ENCODE measurements at regions of chr1 and their contacts with region 1.

Region 1: GRCh38 chr1:182143154-182143657 is 81.7 kb upstream of the ZNF648 start:
- DNase-seq: peak; percentile 86
- H3K4me3 ChIP-seq: no peak overlapping the region
- H3K27ac ChIP-seq: peak overlapping the region; percentile 85
- H3K4me1 ChIP-seq: peaks cover 18% of the 10 kb centered on the region
- H3K27me3 ChIP-seq: peaks cover under 1% of the 10 kb centered on the region; the same call in 1 of the 2 replicates

Region 2: GRCh38 chr1:182397771-182398393 is 254.7 kb after region 1 on chr1:
- in situ Hi-C with region 1: loop called (anchors 5 kb)
- DNase-seq: peak; percentile 62
- H3K4me3 ChIP-seq: no peak overlapping the region
- H3K27ac ChIP-seq: no peak overlapping the region
- H3K4me1 ChIP-seq: peaks cover 13% of the 10 kb centered on the region
- H3K27me3 ChIP-seq: no peaks in the 10 kb centered on the region

Measured in GM23248 (cell line).